Posterior cingulate gyrus (tissue), 11 donors: ENCODE measurements at regions of chrX and their contacts with region 1.

Region 1: DNA sequence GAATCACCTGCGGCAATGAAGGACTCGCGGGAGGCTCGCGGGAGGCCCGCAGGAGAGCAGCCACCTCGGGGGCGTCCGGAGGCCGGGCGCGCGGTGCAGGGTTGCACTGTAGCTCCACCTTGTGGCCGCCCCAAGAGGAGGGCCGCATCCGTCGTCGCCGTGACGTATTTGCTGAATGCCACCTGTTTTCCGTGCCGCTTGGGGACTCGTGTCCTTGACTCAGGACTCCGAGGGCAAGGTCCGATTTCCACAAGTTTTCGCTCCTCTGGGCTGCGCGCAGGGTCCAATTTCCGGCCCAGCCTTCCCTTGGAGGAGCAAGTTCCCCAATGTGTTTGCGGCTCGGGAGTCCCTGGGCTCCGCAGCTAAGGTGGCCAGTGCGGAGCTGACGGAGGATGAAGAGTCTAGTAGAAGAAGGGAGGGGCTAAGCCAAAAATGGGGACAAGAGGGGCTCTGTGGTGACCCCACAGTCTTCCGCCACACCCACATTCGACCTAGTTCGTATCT is 10.7 kb upstream of the DLG3 start:
- DNase-seq: peak in 9 of 10 donors; percentile 65 to 95 (median 73)

Region 2: DNA sequence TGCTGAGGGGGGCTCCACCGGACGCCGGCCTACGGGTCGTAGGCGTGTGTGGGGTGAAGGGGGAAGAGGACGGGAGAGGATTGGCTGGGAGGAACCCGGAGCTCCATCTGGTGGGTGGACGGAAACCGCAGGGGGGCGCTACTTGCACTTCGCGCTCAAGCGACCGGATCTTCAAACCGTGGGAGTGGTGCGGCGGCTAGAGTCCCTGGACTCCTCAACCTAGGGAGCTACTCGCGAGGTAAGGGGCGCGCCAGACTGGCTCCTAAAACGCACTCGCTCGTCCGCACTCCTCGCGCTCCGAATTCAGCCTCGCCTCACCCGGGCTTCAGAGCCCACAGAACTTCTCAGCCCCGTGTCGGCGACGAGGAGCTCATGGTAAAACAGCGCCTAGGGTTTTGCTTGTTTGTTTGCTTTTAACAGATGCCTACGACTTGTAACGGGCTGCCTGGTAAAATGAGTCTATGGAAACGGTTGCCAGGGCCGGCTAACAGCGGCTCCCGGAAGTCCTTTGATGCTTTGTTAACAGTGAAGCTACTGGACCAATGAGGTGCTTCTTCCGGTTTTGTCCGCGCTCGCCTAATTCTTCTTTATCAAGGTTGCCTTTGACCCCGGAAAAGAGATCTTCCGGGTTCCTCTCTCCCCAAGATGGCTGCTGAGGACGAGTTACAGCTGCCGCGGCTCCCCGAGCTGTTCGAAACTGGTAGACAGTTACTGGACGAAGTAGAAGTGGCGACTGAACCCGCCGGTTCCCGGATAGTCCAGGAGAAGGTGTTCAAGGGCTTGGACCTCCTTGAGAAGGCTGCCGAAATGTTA is 300.4 kb before region 1 on chrX and contains the start of gene IGBP1:
- intact Hi-C with region 1: loop called (anchors 2 kb)
- DNase-seq: peak; percentile 68 to 97 (median 76)

Region 3: GRCh38 chrX:70252491-70252890 is 181.4 kb before region 1 on chrX:
- intact Hi-C with region 1: no loop called
- DNase-seq: no peak